Spleen (tissue), 13 donors: ENCODE measurements at regions of chr10 and their contacts with region 1.

Region 1: GRCh38 chr10:37976091-37976879 is at the start of gene ZNF25:
- DNase-seq: peak; percentile 99
- H3K4me3 ChIP-seq: peak within 1 kb of the TSS; percentile 65 to 84 (median 76)
- H3K27ac ChIP-seq: peak within 1 kb of the TSS; percentile 97 to 99 (median 98)
- H3K4me1 ChIP-seq: peaks cover 7 to 27% (median 17%) of the 10 kb centered on the region in 6 donors
- H3K27me3 ChIP-seq: no peaks in the 10 kb centered on the region
- CTCF ChIP-seq: peak; percentile 90 to 99 (median 96)
- POLR2A ChIP-seq: peak; percentile 33 to 45 (median 37)
- total RNA-seq, gene ZNF25: 8.6 to 14.4 (median 11.4) TPM

Region 2: GRCh38 chr10:37857287-37858211 is 118.7 kb before region 1 on chr10 and contains the start of gene ZNF248:
- intact Hi-C with region 1: loop called (anchors 10 kb)
- DNase-seq: peak; percentile 99
- H3K4me3 ChIP-seq: peak within 1 kb of the TSS; percentile 63 to 83 (median 71)
- H3K27ac ChIP-seq: peak within 1 kb of the TSS; percentile 95 to 100 (median 99)
- H3K4me1 ChIP-seq: peaks cover 17 to 45% (median 32%) of the 10 kb centered on the region in 6 donors
- H3K27me3 ChIP-seq: no peaks in the 10 kb centered on the region
- CTCF ChIP-seq: peak in 2 of 11 experiments; percentile 3 to 13
- POLR2A ChIP-seq: peak; percentile 12 to 89 (median 89)
- total RNA-seq, gene ZNF248: 9.2 to 19.3 (median 13.7) TPM

Region 3: GRCh38 chr10:38010119-38010903 is 34.0 kb after region 1 on chr10 and contains the start of gene ZNF33A:
- intact Hi-C with region 1: loop called (anchors 5 kb)
- DNase-seq: peak; percentile 98
- H3K4me3 ChIP-seq: peak within 1 kb of the TSS; percentile 55 to 88 (median 63)
- H3K27ac ChIP-seq: peak within 1 kb of the TSS; percentile 97 to 100 (median 99)
- H3K4me1 ChIP-seq: peaks cover 10 to 66% (median 40%) of the 10 kb centered on the region in 6 donors
- H3K27me3 ChIP-seq: no peaks in the 10 kb centered on the region
- CTCF ChIP-seq: peak in 2 of 11 experiments; percentile 8 to 19
- POLR2A ChIP-seq: peak in 2 of 3 donors; percentile 4 to 74
- total RNA-seq, gene ZNF33A: 33.7 to 61.6 (median 40.0) TPM

Region 4: DNA sequence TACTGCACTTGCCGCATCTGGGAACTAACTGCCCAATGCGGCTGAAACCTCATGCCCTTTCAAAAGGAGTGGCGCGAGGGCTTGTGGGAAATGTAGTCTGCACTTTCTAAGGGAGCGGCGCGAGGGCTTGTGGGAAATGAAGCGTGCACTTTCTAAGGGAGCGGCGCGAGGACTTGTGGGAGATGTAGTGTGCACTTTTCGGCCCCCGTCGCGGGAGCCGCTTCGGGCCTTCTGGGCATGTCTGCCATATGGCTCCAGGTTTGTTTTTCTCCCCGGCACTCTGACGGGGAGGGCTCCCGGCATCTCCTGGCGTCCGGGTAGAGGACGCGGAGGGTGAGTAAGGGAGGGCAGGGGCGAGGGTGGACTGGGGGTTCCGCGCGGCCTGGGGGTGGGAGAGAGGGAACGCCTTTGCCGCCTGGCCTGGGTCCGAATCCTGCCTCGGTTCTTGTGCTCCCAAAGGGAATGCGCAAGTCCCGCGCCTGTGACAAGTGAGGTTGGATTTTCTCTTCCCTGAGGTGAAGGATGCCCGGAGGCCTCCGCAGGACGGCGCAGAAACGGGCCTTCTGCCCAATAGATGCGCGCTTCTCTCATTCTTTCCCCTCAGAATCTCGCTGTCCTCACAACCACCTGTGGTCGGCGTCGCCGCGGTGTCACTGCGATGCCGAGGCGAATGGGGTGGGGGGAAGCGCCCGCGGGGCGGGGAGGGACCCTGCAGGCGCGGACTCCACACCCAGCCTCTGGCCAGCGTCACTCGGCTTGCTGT is 118.1 kb after region 1 on chr10 and contains the start of gene ZNF37A:
- intact Hi-C with region 1: loop called (anchors 10 kb)
- DNase-seq: peak; percentile 97
- H3K4me3 ChIP-seq: peak within 1 kb of the TSS; percentile 64 to 85 (median 76)
- H3K27ac ChIP-seq: peak within 1 kb of the TSS; percentile 84 to 92 (median 86)
- H3K4me1 ChIP-seq: peaks cover 5 to 28% (median 18%) of the 10 kb centered on the region in 6 donors
- H3K27me3 ChIP-seq: no peaks in the 10 kb centered on the region
- CTCF ChIP-seq: peak in 4 of 11 experiments; percentile 5 to 39 (median 24)
- POLR2A ChIP-seq: peak in 1 of 3 donors; percentile 33
- total RNA-seq, gene ZNF37A: 16.7 to 31.2 (median 23.2) TPM